Activated T-helper 2 cell treated with anti-CD3 and anti-CD28 coated beads, Interferon-gamma antibody, Interleukin-2, Interleukin-4, amounts not matched to agents 10 μg/mL and 5 μg/mL and 100 μg/mL, durations not matched to agents 14 hours and 24 hours and 36 hours (primary cell): ENCODE measurements at regions of chr15 and their contacts with region 1.

Region 1: GRCh38 chr15:50354838-50355618 is at the start of gene GABPB1:
- DNase-seq: peak; percentile 89
- H3K4me3 Mint-ChIP-seq: peak within 1 kb of the TSS; percentile 98
- H3K27ac Mint-ChIP-seq: peak within 1 kb of the TSS; percentile 100
- H3K4me1 Mint-ChIP-seq: peaks cover 37% of the 10 kb centered on the region
- H3K27me3 Mint-ChIP-seq: no peaks in the 10 kb centered on the region
- total RNA-seq, gene GABPB1: 69.3 and 69.5 TPM in 2 replicates

Region 2: DNA sequence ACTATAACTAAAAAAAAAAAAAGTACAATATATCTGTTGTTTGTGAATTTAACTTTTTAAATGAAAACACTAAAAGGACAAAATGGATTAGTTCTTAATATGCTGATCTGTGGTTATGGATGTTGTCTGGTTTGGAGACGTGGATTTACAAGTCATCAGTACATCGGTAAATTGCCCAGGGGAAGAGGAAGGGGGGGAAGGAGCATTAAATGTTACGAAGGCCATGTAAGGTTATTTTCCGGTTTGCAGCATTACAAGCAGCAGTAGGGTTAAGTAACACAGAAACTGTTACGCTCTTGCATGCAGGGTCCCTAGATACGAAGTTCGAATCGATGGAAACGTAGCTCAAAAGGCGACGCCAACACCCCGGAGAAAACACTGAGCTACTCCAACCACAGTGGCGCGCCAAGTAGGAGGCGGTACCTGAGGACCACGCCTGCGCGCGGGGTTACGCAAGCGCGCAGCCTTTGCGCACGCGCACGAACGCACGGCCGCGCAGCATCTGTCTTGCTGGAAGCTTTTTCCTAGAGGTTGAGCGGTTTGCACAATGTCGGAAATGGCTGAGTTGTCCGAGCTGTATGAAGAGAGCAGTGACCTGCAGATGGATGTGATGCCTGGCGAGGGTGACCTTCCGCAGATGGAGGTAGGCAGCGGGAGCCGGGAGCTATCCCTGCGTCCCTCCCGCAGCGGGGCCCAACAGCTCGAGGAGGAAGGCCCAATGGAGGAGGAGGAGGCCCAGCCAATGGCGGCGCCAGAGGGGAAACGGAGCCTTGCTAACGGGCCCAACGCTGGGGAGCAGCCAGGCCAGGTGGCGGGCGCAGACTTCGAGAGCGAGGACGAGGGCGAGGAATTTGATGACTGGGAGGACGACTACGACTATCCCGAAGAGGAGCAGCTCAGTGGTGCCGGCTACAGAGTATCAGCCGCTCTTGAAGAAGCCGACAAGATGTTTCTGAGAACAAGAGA is 1477.1 kb before region 1 on chr15 and contains the start of gene EID1:
- intact Hi-C with region 1: loop called (anchors 5 kb)
- DNase-seq: peak; percentile 95
- H3K4me3 Mint-ChIP-seq: peak within 1 kb of the TSS; percentile 95
- H3K27ac Mint-ChIP-seq: peak within 1 kb of the TSS; percentile 95
- H3K4me1 Mint-ChIP-seq: peaks cover 56% of the 10 kb centered on the region
- H3K27me3 Mint-ChIP-seq: no peaks in the 10 kb centered on the region
- total RNA-seq, gene EID1: 168 and 202 TPM in 2 replicates

Region 3: GRCh38 chr15:50182219-50183013 is 172.6 kb before region 1 on chr15:
- intact Hi-C with region 1: loop called (anchors 5 kb)
- DNase-seq: peak; percentile 53
- H3K4me3 Mint-ChIP-seq: peak overlapping the region; percentile 98
- H3K27ac Mint-ChIP-seq: peak overlapping the region; percentile 96
- H3K4me1 Mint-ChIP-seq: peaks cover 44% of the 10 kb centered on the region
- H3K27me3 Mint-ChIP-seq: no peaks in the 10 kb centered on the region

Region 4: GRCh38 chr15:50315814-50316630 is 39.0 kb before region 1 on chr15:
- intact Hi-C with region 1: no loop called
- DNase-seq: no peak
- H3K4me3 Mint-ChIP-seq: no peak overlapping the region
- H3K27ac Mint-ChIP-seq: no peak overlapping the region
- H3K4me1 Mint-ChIP-seq: peaks cover 34% of the 10 kb centered on the region
- H3K27me3 Mint-ChIP-seq: no peaks in the 10 kb centered on the region

Region 5: GRCh38 chr15:50377867-50378751 is 23.1 kb after region 1 on chr15:
- intact Hi-C with region 1: loop called (anchors 1 kb)
- DNase-seq: no peak
- H3K4me3 Mint-ChIP-seq: peak overlapping the region; percentile 51
- H3K27ac Mint-ChIP-seq: peak overlapping the region; percentile 92
- H3K4me1 Mint-ChIP-seq: peaks cover 18% of the 10 kb centered on the region
- H3K27me3 Mint-ChIP-seq: no peaks in the 10 kb centered on the region

Region 6: GRCh38 chr15:50562735-50563640 is 208.0 kb after region 1 on chr15:
- intact Hi-C with region 1: loop called (anchors 2 kb)
- DNase-seq: no peak
- H3K4me3 Mint-ChIP-seq: peak overlapping the region; percentile 15
- H3K27ac Mint-ChIP-seq: peak overlapping the region; percentile 95
- H3K4me1 Mint-ChIP-seq: peaks cover 29% of the 10 kb centered on the region
- H3K27me3 Mint-ChIP-seq: no peaks in the 10 kb centered on the region

Region 7: DNA sequence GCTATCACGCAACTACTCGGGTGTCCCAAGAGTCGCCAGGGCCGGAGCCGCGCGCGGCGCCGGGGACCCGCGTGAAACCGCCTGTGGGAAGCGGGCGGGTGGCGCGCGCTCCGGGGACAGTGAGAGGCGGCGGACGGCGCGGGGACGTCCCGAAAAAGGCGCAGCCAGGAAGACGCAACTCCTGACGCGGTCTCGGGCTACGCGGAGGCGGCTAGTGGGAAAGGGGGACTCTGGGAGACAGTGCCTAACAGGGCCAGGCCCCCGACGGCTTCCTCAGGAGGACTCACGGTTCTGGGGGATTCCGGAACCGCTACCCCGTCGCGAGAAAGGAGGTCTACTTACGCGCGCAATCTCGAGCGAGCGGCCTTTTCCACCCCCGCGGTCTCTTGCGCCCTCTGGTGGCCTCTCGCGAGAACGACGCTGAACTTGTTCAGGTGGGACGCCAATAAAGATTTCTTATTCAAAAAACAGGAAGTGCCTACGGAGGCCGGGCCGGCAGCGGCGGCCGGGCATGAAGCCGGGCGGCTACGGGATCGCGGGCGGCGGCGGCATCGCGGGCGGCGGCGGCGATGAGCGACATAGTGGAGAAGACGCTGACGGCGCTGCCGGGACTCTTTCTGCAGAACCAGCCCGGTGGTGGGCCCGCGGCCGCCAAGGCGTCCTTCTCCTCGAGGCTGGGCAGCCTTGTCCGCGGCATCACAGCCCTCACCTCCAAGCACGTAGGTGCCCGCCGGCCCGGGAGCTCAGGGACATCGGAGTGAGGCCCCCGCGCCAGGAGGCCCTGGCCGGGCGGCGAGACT is 553.4 kb after region 1 on chr15 and contains the start of gene AP4E1:
- intact Hi-C with region 1: loop called (anchors 1 kb)
- DNase-seq: peak; percentile 93
- H3K4me3 Mint-ChIP-seq: peak within 1 kb of the TSS; percentile 97
- H3K27ac Mint-ChIP-seq: peak within 1 kb of the TSS; percentile 99
- H3K4me1 Mint-ChIP-seq: peaks cover 14% of the 10 kb centered on the region
- H3K27me3 Mint-ChIP-seq: no peaks in the 10 kb centered on the region
- total RNA-seq, gene AP4E1: 16.7 and 17.9 TPM in 2 replicates